ENCODE measurements at regions of chr3 and their contacts with region 1.

Region 1: DNA sequence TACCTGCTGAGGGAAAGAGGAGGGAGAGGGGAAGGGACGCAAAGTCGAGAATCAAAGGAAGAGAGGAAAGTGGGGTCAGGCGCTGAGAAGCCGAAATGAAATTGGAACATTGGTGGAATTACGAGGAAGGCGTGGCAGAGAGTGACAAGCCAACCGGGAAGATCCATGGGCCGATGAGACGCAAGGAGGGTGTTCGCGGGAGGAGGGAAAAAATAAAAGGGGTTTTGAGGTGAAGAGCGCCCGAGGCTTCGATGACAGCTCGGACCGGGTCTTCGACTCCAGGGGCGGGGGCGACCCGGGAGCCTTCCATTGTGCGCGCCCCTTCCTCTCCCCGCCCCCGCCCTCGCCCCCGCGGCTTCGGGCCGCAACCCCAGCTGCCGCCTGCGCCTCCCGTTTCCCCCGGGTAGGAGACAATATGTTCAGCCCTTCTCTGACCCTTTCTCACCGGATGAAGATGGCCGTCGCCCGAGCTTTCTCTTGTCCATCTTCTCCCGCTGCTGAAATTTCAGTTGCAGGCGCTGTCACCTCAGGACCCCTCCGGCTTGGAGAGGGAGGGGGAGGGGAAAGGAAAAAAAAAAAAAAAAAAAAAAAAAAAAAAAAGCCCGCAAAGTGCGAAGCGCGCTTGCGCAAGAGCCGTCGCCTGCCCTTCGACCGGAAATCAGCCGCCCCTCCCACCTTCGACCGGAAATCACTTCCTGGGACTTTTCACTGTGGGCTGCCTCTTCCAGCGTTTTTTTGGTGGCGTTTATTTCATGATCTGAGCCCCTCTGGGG is at the start of gene SENP7:
- DNase-seq: peak; percentile 79
- H3K4me3 Mint-ChIP-seq: peak within 1 kb of the TSS; percentile 100
- H3K27ac Mint-ChIP-seq: peak within 1 kb of the TSS; percentile 92
- H3K4me1 Mint-ChIP-seq: peaks cover 49% of the 10 kb centered on the region
- H3K27me3 Mint-ChIP-seq: no peaks in the 10 kb centered on the region
- total RNA-seq, gene SENP7: 28.3 to 30.5 TPM

Region 2: DNA sequence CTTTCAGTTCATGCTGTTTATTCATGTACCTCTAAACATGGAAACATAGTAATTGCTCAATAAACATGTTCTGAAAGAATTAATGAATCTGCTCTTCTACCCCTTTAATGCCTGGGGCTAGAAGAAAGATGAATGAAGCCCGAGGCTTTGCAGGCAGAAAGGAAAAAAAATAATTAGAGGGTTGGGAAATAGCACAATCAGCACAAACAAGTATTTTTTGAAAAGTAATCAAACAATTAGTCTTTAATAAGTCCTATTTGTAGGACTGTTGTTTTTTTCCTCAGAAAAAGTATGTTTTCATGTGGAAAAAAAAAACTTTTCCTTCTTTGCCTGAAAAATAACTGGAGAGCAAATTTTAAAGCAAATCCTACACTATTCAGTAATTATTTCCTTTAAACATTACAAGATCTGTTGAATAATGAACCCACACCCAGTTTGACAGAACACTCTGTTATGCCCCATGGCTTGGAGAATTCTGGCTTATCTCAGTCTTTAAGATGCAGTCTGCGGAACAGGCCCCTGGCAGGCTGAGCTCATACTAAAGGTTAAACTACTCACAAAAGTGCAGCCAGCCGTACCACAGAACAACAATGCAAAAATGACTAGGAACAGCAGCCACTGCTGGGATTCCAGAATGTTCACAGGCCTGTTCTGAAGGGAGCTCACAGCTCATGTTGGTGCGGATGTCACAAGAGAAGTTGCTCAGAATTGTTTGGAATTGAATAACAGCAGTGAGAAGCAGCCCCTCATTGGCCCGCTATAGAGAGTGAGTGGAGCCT is 598.8 kb before region 1 on chr3:
- CTCF ChIA-PET with region 1: no interaction called
- POLR2A ChIA-PET with region 1: no interaction called
- DNase-seq: no peak
- H3K4me3 Mint-ChIP-seq: no peak overlapping the region
- H3K27ac Mint-ChIP-seq: no peak overlapping the region
- H3K4me1 Mint-ChIP-seq: no peaks in the 10 kb centered on the region
- H3K27me3 Mint-ChIP-seq: peaks cover 9% of the 10 kb centered on the region

Region 3: DNA sequence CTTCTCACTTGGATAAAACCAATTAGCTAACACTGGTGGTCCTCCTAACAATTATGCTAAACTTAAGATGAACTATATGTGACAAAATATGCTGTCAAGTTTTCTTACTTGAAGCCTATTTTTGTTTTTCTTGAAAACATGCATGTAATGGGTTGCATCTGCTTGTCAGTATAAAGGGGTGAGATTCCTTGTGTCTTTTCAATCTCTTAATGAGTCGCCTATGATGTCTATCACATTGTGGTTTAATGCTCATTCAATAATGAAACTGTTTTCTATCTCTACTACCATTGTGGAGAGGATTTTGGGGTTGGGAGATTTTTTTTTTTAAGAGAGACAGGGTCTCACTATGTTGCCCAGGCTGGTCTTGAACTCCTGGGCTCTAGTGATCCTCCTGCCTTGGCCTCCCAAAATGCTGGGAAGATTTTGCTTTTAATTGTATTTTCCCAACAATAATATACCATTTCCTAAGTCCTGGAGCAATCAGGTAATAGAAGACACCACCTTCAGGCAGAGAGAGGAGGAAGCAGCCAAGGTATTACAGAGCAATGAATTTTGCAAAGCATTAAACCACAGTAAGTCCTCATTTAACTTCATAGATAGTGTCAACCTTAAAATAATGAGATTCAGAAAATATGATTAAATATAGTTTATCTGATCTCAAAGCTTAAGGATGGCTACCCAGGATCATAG is 31.5 kb after region 1 on chr3:
- CTCF ChIA-PET with region 1: interaction called, 5 read pairs
- POLR2A ChIA-PET with region 1: interaction called, 26 read pairs
- DNase-seq: no peak
- H3K4me3 Mint-ChIP-seq: no peak overlapping the region
- H3K27ac Mint-ChIP-seq: no peak overlapping the region
- H3K4me1 Mint-ChIP-seq: peaks cover 32% of the 10 kb centered on the region
- H3K27me3 Mint-ChIP-seq: no peaks in the 10 kb centered on the region

Region 4: GRCh38 chr3:101561630-101562328 is 48.9 kb after region 1 on chr3 and contains the start of gene TRMT10C:
- CTCF ChIA-PET with region 1: interaction called, 6 read pairs
- POLR2A ChIA-PET with region 1: interaction called, 35 read pairs
- DNase-seq: peak; percentile 95
- H3K4me3 Mint-ChIP-seq: peak within 1 kb of the TSS; percentile 98
- H3K27ac Mint-ChIP-seq: peak within 1 kb of the TSS; percentile 93
- H3K4me1 Mint-ChIP-seq: peaks cover 37% of the 10 kb centered on the region
- H3K27me3 Mint-ChIP-seq: peaks cover under 1% of the 10 kb centered on the region
- total RNA-seq, gene TRMT10C: 21.4 to 22.7 TPM

Region 5: GRCh38 chr3:101665851-101666250 is 153.0 kb after region 1 on chr3:
- CTCF ChIA-PET with region 1: no interaction called
- POLR2A ChIA-PET with region 1: no interaction called
- DNase-seq: no peak
- H3K4me3 Mint-ChIP-seq: no peak overlapping the region
- H3K27ac Mint-ChIP-seq: no peak overlapping the region
- H3K4me1 Mint-ChIP-seq: peaks cover 1% of the 10 kb centered on the region
- H3K27me3 Mint-ChIP-seq: no peaks in the 10 kb centered on the region

Measured in activated CD4-positive, alpha-beta memory T cell treated with anti-CD3 and anti-CD28 coated beads, Interleukin-2, amount 10 ng/mL, durations not matched to agents 7 days and 5 days (primary cell).